ENCODE measurements at regions of chr19 and their contacts with region 1.

Region 1: GRCh38 chr19:38634757-38635482 is 12.5 kb upstream of the ACTN4 start:
- DNase-seq: no peak
- H3K4me3 ChIP-seq: no peak overlapping the region
- CTCF ChIP-seq: peak; percentile 89

Region 2: DNA sequence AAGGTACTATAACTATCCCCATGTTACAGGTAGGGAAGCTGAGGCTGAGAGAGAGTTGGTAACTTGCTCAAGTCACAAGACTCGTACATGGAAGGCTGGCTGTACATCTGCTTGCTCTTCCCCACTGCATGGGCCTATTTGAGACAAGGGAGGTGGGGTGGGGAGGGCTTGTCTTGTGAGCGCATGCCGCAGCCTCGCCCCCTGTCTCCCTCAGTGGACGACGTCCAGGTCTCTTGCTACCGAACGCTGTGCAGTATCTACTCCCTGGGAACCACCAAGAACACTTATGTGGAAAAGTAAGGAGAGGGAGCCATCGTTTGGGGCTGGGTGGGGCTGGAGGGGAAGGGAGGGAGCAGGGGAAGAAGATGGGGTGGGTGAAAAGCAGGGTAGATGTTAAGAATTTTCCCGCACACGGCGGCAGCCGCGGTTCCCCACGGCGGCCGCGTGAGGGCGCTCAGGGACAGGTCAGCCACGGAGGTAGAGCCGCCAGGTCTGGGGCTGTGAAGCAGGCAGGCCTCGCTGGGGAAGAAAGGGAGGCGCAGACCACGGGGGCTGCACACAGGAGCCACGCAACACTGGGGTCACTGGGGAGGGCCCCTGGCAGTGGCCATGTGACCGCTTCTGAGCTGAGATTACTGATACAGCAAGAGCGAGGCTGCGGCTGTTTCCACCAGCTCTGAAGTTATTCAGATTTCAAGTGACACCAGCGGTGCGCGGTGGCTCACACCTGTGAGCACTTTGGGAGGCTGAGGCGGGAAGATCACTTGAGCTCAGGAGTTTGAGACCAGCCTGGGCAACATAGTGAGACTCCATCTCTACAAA is 119.9 kb before region 1 on chr19:
- CTCF ChIA-PET with region 1: interaction called, 65 read pairs
- POLR2A ChIA-PET with region 1: no interaction called
- DNase-seq: no peak
- H3K4me3 ChIP-seq: no peak overlapping the region
- CTCF ChIP-seq: peak; percentile 90

Region 3: GRCh38 chr19:38618590-38619360 is 16.1 kb before region 1 on chr19 and contains the start of gene EIF3K:
- CTCF ChIA-PET with region 1: interaction called, 100 read pairs
- POLR2A ChIA-PET with region 1: interaction called, 6 read pairs
- DNase-seq: peak; percentile 91
- H3K4me3 ChIP-seq: peak within 1 kb of the TSS; percentile 86
- CTCF ChIP-seq: no peak

Region 4: DNA sequence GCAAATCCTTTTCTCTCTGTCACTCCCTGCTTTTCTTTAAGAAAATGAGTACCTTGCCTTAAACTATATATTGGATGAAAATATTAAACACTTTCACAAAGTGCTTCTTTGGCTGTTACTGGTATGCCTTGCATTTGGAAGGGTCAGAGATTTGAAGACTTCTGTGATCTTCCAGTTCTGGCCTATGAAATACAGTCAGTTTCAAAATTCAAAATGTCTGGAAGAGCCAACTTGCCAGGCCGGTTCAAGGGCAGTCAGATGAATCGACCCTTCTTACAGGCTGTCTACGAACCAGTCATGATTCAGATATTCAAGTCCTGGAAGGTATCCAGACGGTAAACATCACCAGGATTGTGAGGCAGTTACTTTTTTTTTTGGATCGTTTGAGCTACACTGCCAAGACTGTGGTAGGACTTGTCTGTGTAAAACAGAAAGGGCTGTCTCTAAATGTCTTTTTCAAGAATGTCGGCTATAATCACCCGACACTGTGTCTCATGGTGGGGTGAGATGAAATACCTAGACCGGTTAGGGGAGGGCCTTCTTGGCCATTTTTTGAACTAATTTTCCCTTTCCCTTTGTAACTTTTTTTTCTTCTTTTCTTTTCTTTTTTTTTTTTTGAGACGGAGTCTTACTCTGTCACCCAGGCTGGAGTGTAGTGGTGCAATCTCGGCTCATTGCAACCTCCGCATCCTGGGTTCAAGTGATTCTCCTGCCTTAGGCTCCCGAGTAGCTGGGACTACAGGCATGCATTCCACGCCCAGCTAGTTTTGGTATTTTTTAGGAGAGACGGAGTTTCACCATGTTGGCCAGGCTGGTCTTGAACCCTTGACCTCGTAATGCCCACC is 23.8 kb after region 1 on chr19:
- CTCF ChIA-PET with region 1: interaction called, 106 read pairs
- POLR2A ChIA-PET with region 1: no interaction called
- DNase-seq: peak; percentile 99
- H3K4me3 ChIP-seq: no peak overlapping the region; the same call in none of the 2 replicates
- CTCF ChIP-seq: no peak

Region 5: GRCh38 chr19:38831142-38831605 is 196.3 kb after region 1 on chr19:
- CTCF ChIA-PET with region 1: no interaction called
- POLR2A ChIA-PET with region 1: no interaction called
- DNase-seq: peak; percentile 77
- H3K4me3 ChIP-seq: peak overlapping the region; percentile 81
- CTCF ChIP-seq: no peak

Region 6: DNA sequence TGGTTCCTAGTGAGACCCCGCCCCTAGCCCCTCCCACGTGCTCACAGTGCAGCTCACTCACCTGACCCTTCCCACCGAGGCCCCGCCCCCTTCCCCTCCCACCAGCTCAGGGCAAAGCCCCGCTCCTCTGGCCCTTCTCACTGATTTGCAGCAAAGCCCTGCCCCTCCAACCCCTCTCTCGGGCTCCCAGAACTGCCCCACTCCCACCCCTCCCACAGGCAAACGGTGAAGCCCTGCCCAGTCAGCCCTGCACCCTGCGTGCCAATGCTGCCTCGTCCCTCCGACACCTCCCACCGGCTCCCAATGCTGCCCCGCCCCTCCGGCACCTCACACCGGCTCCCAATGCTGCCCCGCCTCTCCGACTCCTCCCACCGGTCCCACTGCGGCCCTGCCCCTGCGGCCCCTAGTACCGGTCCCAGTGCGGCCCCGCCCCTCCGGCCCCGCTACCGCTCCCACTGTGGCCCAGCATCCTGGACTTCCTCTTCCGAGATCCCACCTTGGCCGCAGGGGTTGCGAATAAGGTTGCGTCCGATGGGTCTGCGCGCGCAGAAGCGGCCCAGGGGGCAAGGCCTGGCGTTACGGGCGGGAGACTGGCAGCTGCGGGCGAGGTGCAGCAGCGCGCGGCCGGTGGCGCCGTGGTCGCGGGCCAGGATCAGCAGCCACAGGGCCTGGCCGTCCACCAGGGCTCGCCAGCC is 396.6 kb after region 1 on chr19:
- CTCF ChIA-PET with region 1: no interaction called
- POLR2A ChIA-PET with region 1: no interaction called
- DNase-seq: no peak
- H3K4me3 ChIP-seq: peak overlapping the region; percentile 59
- CTCF ChIP-seq: no peak